CD4-positive, alpha-beta memory T cell (primary cell): ENCODE measurements at regions of chr5 and their contacts with region 1.

Region 1: DNA sequence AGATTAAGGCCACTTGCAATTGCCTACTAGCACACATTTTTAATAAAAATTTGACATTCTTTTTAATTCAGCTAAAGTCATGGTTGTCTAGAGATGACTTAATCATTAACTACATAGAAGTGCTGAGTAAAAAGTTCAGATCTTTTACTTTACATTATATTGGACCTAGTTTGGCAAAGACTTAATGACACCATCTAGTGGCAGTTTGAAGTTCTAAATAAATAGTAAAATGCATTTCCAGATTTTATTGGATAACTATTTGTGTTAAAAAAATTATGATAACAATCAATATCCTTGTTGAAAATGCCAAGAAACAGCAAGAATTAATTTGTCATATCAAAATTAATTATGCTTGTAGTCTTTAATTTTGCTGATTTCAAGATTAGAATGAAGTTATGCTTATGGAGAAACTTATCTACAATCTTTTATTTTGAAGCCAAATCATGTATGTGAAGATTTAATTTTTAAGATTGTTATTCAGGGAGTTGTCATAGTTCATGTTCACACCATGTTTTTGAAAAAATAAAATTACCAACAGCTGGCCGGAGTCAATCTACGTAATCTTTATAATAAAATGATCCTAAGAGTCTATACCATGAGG is 69.6 kb upstream of the PJA2 start:
- DNase-seq: peak in 3 of 5 donors; percentile 10 to 16 (median 16)
- H3K4me3 ChIP-seq: no peak overlapping the region
- H3K4me3 Mint-ChIP-seq: no peak overlapping the region
- H3K27ac ChIP-seq: no peak overlapping the region
- H3K27ac Mint-ChIP-seq: no peak overlapping the region
- H3K4me1 ChIP-seq: no peaks in the 10 kb centered on the region
- H3K4me1 Mint-ChIP-seq: no peaks in the 10 kb centered on the region
- H3K27me3 ChIP-seq: no peaks in the 10 kb centered on the region
- H3K27me3 Mint-ChIP-seq: peaks cover 2 to 9% of the 10 kb centered on the region in 2 donors

Region 2: GRCh38 chr5:108642167-108642906 is 837.0 kb before region 1 on chr5:
- CTCF ChIA-PET with region 1: interaction called, 7 read pairs
- POLR2A ChIA-PET with region 1: no interaction called
- intact Hi-C with region 1: loop called (anchors 1 kb)
- DNase-seq: peak; percentile 28 to 58 (median 43)
- H3K4me3 ChIP-seq: no peak overlapping the region
- H3K4me3 Mint-ChIP-seq: peak overlapping the region in 1 of 8 donors; percentile 37
- H3K27ac ChIP-seq: no peak overlapping the region
- H3K27ac Mint-ChIP-seq: peak overlapping the region in 2 of 7 donors; percentile 5 to 31
- H3K4me1 ChIP-seq: no peaks in the 10 kb centered on the region
- H3K4me1 Mint-ChIP-seq: peaks cover 0 to 4% (median 3%) of the 10 kb centered on the region in 4 donors
- H3K27me3 ChIP-seq: no peaks in the 10 kb centered on the region
- H3K27me3 Mint-ChIP-seq: peaks cover 1 to 11% of the 10 kb centered on the region in 2 donors

Region 3: GRCh38 chr5:108681079-108681921 is 798.1 kb before region 1 on chr5:
- CTCF ChIA-PET with region 1: interaction called, 3 read pairs
- POLR2A ChIA-PET with region 1: no interaction called
- intact Hi-C with region 1: loop called (anchors 1 kb)
- DNase-seq: peak; percentile 27 to 47 (median 43)
- H3K4me3 ChIP-seq: no peak overlapping the region
- H3K4me3 Mint-ChIP-seq: no peak overlapping the region
- H3K27ac ChIP-seq: no peak overlapping the region
- H3K27ac Mint-ChIP-seq: no peak overlapping the region
- H3K4me1 ChIP-seq: no peaks in the 10 kb centered on the region
- H3K4me1 Mint-ChIP-seq: no peaks in the 10 kb centered on the region
- H3K27me3 ChIP-seq: no peaks in the 10 kb centered on the region
- H3K27me3 Mint-ChIP-seq: peaks cover 4 to 11% of the 10 kb centered on the region in 2 donors

Region 4: DNA sequence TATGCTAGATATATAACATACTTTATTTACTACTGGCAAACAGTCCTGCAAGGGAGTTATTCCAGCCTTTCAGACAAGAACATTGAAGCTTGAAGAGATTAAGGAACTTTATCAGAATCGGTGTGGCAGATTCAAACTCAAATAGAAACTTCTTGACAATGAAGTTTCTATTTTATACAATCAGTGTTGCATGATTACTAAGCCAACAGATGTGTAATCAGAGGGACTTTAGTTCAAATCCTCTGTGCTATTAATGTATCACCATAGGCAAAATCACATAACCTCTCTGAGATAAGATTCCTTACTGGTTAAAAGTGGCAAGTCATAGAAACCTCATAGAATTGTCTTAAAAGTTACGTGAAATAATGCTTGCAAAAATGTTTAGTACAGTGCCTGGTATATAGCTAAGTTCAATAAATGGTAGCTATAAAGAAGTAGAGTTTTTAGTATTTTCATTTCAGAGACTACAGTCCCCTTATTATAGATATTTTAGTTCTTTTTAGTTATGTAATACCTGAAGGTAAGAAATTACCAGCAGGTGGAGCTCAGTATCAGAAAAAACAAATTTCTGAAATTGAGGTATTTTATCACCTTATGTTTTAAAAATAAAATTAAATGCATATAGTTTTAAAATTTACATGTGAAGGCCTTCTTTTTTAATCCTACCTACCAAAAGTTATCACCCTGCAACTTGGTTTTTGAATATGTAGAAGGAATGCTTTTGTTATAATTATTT is 559.6 kb before region 1 on chr5:
- CTCF ChIA-PET with region 1: interaction called, 3 read pairs
- POLR2A ChIA-PET with region 1: no interaction called
- intact Hi-C with region 1: loop called (anchors 1 kb)
- DNase-seq: peak in 1 of 5 donors; percentile 6
- H3K4me3 ChIP-seq: no peak overlapping the region
- H3K4me3 Mint-ChIP-seq: no peak overlapping the region
- H3K27ac ChIP-seq: no peak overlapping the region
- H3K27ac Mint-ChIP-seq: no peak overlapping the region
- H3K4me1 ChIP-seq: no peaks in the 10 kb centered on the region
- H3K4me1 Mint-ChIP-seq: peaks cover 0 to 5% (median 4%) of the 10 kb centered on the region in 4 donors
- H3K27me3 ChIP-seq: no peaks in the 10 kb centered on the region
- H3K27me3 Mint-ChIP-seq: no peaks in the 10 kb centered on the region

Region 5: DNA sequence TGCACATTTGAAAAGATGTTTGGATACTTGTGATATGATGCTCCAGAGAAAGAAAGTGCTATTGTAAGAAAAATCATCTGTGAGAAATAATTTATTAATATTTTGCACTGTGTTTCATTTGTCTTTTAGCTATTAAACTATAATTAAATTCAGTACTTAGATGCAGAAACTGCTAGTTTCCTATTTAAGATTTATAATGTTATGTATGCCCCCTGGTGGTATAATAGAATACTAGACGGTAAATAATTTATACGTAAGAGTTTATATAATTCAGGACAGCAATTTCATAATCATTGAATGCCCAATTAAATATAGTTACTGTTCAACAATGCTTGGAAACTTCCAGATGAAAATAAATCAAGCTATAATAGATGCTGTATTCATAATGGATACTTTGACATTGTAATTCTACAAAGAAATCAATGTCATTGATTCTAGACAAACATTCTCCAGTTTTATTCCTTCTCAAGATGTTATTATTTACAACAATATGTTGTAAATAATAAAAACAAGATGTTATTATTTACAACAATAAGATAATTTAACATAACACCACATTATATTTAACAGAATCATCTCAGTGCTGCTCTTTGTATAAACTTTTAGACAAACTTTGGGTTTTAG is 1146.1 kb after region 1 on chr5:
- CTCF ChIA-PET with region 1: no interaction called
- POLR2A ChIA-PET with region 1: no interaction called
- intact Hi-C with region 1: loop called (anchors 1 kb)
- DNase-seq: peak in 3 of 5 donors; percentile 19 to 35 (median 26)
- H3K4me3 ChIP-seq: no peak overlapping the region
- H3K4me3 Mint-ChIP-seq: no peak overlapping the region
- H3K27ac ChIP-seq: no peak overlapping the region
- H3K27ac Mint-ChIP-seq: no peak overlapping the region
- H3K4me1 ChIP-seq: no peaks in the 10 kb centered on the region
- H3K4me1 Mint-ChIP-seq: no peaks in the 10 kb centered on the region
- H3K27me3 ChIP-seq: no peaks in the 10 kb centered on the region
- H3K27me3 Mint-ChIP-seq: peaks cover 2 to 4% of the 10 kb centered on the region in 2 donors